ENCODE measurements at regions of chr16 and their contacts with region 1.

Region 1: GRCh38 chr16:87853411-87854052 is 15.8 kb downstream of the SLC7A5 start:
- DNase-seq: peak; percentile 85

Region 2: GRCh38 chr16:87778830-87779579 is 74.5 kb before region 1 on chr16:
- CTCF ChIA-PET with region 1: interaction called, 7 read pairs
- POLR2A ChIA-PET with region 1: interaction called, 15 read pairs
- DNase-seq: peak; percentile 84

Region 3: DNA sequence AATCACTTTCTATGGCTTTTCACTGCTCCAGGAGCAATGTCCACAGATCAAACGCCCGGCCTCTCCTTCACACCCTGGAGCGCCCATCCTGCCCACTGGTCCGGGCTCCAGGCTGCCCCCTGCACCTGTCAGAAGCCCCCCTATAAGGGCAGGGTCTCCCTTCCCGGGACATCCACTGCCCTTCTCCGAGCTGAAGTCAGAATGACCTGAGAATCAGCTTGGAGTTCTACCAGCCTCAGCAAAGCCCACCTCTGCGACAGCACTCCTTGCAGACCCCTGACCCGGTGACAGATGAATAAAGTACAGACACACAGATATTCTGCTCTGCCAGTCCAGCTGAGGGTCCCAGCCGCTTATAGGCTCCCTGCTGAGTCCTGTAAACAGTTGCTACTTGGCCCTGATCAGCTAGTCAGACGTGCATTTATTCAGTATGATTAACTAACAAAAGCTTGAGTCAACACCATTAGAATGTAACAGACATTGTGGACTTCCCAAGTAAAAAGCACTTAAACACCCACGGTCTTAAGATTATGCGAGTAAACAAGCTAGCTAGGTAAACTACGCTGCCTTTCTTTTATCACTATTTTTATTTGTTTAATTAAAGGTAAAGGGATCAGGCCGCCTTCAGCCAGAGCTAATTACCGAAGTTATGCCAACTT is 10.9 kb after region 1 on chr16:
- CTCF ChIA-PET with region 1: interaction called, 8 read pairs
- POLR2A ChIA-PET with region 1: interaction called, 18 read pairs
- DNase-seq: no peak

Region 4: DNA sequence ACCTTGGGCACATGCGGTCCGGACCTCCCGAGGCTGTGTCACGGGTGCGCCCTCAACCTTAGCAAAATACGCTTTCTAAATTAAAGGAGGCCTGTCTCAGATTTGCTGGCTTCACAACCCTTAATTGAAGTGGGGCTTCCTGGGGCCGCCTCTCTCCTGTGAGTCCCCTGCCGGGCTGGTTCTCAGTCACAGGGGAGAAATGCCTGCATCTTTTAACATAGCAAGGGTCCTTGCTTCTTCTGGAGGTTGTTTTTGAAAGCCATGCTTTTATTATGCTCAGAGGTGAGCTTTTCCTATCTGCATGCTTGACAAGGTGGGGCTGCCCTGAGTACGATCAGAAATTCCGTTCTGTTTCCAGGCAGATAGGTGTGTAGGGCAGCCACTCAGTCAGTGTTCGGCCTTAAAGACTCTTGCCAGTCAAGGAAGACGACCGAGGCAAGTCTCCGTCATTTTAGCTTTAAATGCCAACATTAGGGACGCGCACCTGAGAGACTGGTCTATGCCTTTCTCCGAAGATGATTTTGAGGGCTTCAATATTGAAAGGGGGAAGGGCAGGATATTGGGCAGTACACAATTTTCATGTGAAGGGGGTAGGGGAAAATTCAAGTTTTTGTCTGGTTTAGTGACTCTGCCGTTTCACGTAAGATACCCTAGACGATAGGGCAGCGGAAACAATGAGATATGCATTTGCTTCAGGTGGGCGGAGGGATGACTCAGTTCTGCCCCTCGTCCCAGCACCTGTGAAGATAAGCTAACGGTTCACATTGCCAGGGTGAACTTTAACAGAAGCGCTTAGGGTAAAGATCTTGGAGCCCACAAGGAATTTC is 21.3 kb after region 1 on chr16:
- CTCF ChIA-PET with region 1: interaction called, 16 read pairs
- POLR2A ChIA-PET with region 1: interaction called, 17 read pairs
- DNase-seq: no peak

Region 5: DNA sequence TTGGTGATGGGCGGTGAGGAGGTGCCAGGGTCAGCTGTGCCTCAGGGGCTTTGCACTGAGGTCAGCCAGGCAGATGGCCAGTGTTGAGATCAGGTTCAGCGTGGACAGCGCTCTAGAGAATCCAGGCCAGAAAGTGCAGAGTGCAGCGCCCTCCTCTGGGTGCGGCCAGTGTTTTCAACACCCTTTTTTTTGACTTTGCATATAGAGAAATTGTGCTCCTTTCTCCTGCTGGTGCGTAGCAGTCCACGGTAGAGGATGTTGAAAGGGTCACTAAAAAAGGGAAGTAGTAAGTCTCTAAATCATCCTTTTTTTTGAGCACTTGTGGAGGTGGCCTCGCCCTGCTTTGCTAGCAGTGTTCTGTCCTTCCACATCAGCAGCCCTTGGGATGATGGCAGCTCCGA is 151.6 kb after region 1 on chr16:
- CTCF ChIA-PET with region 1: no interaction called
- POLR2A ChIA-PET with region 1: no interaction called
- DNase-seq: no peak